A673 (cell line): ENCODE measurements at regions of chrX and their contacts with region 1.

Region 1: GRCh38 chrX:11143931-11144678 is 33.0 kb downstream of the HCCS start:
- DNase-seq: peak; percentile 86
- H3K4me3 ChIP-seq: no peak overlapping the region
- H3K27ac ChIP-seq: no peak overlapping the region
- H3K4me1 ChIP-seq: no peaks in the 10 kb centered on the region
- H3K27me3 ChIP-seq: no peaks in the 10 kb centered on the region
- CTCF ChIP-seq: peak; percentile 75

Region 2: DNA sequence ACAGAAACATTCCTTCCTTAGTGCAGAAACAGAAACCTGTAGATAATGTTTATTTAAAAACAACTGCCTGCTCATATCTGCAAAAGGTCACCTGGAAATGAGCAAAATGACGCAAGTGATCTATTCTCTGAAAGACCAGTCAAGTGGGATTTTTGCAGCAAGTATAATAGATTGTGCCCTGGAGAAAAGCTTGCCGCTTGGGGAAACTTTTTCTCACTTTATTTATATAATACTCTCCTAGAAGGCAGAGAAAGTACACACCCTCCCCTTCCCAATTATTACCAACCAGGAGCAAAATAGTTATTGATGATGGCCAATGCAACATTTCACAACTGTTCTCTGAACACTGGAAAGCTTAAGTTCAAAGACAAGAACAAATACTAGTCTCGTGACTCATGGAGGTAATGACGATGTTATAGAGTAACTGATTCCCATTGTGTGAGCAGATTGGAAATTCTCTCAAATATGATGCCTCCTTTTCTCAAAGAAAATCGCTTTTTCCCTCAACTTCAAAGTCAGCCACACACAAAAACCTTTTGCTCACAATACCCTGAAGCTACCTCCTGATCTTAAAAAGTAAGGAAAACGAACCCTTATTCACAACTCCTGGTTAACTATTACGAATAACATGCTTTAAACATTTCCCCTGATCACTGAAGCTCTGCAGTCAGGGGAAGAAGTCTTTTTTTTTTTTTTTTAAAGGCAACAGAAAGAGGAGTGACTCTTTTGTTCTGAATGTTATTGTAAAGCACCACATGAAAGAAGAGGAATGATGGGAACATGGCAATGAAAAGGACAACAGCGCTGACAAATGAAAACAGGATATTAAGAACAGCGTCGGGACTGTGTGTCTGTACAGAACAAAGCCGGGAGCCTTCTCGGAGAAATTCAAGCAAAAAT is 564.7 kb before region 1 on chrX:
- CTCF ChIA-PET with region 1: no interaction called
- POLR2A ChIA-PET with region 1: no interaction called
- intact Hi-C with region 1: no loop called
- DNase-seq: no peak
- H3K4me3 ChIP-seq: no peak overlapping the region
- H3K27ac ChIP-seq: no peak overlapping the region
- H3K4me1 ChIP-seq: peaks cover 7% of the 10 kb centered on the region
- H3K27me3 ChIP-seq: no peaks in the 10 kb centered on the region
- CTCF ChIP-seq: no peak

Region 3: GRCh38 chrX:10926891-10927290 is 217.2 kb before region 1 on chrX:
- CTCF ChIA-PET with region 1: no interaction called
- POLR2A ChIA-PET with region 1: no interaction called
- intact Hi-C with region 1: no loop called
- DNase-seq: no peak
- H3K4me3 ChIP-seq: no peak overlapping the region
- H3K27ac ChIP-seq: no peak overlapping the region
- H3K4me1 ChIP-seq: no peaks in the 10 kb centered on the region
- H3K27me3 ChIP-seq: no peaks in the 10 kb centered on the region
- CTCF ChIP-seq: no peak

Region 4: DNA sequence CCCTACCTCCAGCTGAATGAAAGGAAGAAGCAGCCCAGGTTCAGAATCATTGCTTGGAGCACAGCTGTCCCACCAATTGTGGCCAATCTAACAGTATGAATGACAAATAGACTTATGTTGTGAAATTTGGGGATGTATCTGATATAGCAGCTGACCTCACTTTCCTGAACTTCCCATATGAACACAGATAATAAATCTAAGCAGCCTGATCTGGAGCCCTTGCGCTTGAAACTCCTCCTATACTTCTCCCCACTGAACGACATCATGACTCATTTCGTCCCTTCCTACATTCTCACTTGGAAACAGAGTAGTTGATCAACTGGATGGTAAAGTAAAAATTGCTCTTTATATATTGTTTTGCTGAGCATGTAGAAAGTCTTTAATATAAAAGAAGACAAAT is 124.9 kb after region 1 on chrX:
- CTCF ChIA-PET with region 1: interaction called, 10 read pairs
- POLR2A ChIA-PET with region 1: no interaction called
- intact Hi-C with region 1: no loop called
- DNase-seq: no peak
- H3K4me3 ChIP-seq: no peak overlapping the region
- H3K27ac ChIP-seq: no peak overlapping the region
- H3K4me1 ChIP-seq: no peaks in the 10 kb centered on the region
- H3K27me3 ChIP-seq: peaks cover 16% of the 10 kb centered on the region
- CTCF ChIP-seq: no peak

Region 5: DNA sequence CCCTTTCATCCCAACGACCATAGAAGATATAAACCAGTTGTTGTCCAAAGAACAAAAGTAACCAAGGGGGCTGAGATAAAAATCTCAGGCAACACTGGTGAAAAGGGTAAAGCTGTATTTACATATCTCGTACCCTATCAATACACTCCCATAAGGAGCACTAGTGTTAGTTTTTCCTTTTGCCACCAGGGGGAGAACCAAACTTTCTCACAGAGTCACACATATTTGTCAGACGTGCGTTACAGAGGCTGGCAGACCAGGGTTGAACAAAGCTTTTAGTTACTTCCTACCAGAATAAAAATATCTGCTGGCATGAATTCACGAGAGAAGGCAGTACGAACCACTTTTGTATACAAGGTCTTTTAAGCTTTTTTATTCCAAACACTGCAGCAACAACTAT is 237.4 kb after region 1 on chrX:
- CTCF ChIA-PET with region 1: no interaction called
- POLR2A ChIA-PET with region 1: no interaction called
- intact Hi-C with region 1: loop called (anchors 5 kb)
- DNase-seq: peak; percentile 76
- H3K4me3 ChIP-seq: no peak overlapping the region
- H3K27ac ChIP-seq: no peak overlapping the region
- H3K4me1 ChIP-seq: no peaks in the 10 kb centered on the region
- H3K27me3 ChIP-seq: no peaks in the 10 kb centered on the region
- CTCF ChIP-seq: peak; percentile 70

Region 6: DNA sequence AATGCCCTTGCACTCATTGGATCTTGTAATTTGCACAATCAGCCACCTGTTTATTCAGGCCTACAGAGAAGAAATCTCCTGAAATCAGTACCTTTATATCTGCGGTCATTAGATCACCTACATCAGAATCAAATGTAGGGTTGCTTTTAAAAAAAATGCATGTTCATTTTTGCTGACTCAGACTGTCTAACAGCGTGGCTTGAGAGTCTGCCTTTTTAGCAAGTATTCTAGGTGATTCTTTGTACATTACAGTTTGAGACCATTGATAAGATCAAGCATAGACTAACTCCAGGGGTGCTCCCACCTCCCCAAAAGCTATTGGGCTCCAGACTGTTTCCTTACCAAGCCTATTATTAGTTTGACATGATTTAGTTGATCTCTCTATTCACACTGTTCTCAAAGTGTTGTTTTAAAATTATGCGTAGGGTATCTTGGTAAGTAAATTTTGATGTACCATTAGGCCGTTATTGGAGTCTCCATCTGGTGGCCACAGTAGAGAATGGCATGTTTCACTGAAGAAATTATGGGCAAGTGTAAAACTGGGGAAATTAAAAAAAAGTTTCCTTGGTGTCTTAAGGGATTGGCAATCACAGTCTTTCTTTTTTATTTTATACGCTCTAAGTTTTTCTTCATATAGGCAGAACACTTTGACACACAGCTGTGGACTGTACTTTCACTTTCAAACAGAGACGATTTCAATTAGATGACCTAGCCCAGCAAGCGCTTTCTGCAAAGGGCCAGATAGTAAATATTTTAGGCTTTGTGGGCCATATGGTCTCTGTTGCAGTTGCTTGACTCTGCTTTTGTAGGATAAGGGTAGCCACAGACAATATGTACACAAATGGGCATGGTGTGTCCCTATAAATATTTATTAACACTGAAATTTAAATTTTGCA is 580.3 kb after region 1 on chrX:
- CTCF ChIA-PET with region 1: no interaction called
- POLR2A ChIA-PET with region 1: no interaction called
- intact Hi-C with region 1: loop called (anchors 2 kb)
- DNase-seq: peak; percentile 49
- H3K4me3 ChIP-seq: no peak overlapping the region
- H3K27ac ChIP-seq: no peak overlapping the region
- H3K4me1 ChIP-seq: no peaks in the 10 kb centered on the region
- H3K27me3 ChIP-seq: peaks cover 7% of the 10 kb centered on the region
- CTCF ChIP-seq: peak; percentile 79

Region 7: DNA sequence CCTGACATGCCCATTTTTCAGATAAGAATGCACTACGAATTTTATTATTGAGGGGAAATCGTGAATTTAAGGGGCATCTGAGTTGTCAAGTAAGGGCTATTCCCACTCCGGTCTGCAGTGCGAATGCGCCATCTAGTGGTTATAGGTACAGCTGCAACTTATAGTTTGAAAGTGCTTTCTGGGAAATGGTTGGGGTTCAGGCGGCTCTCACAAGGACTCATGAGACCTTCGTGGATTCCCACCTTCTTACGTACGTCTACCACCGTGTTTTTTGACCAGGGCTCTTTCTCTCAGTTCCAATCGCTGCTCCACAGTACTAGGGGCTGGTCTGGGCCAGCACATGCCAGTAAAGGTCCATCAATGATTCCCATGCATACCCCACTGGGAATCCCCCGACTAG is 626.2 kb after region 1 on chrX:
- CTCF ChIA-PET with region 1: no interaction called
- POLR2A ChIA-PET with region 1: no interaction called
- intact Hi-C with region 1: loop called (anchors 5 kb)
- DNase-seq: peak; percentile 68
- H3K4me3 ChIP-seq: no peak overlapping the region
- H3K27ac ChIP-seq: no peak overlapping the region
- H3K4me1 ChIP-seq: no peaks in the 10 kb centered on the region
- H3K27me3 ChIP-seq: no peaks in the 10 kb centered on the region
- CTCF ChIP-seq: peak; percentile 90